Activated CD8-positive, alpha-beta T cell treated with anti-CD3 and anti-CD28 coated beads, Interleukin-2, amount 10 ng/mL, durations not matched to agents 7 days and 5 days (primary cell): ENCODE measurements at regions of chr5 and their contacts with region 1.

Region 1: DNA sequence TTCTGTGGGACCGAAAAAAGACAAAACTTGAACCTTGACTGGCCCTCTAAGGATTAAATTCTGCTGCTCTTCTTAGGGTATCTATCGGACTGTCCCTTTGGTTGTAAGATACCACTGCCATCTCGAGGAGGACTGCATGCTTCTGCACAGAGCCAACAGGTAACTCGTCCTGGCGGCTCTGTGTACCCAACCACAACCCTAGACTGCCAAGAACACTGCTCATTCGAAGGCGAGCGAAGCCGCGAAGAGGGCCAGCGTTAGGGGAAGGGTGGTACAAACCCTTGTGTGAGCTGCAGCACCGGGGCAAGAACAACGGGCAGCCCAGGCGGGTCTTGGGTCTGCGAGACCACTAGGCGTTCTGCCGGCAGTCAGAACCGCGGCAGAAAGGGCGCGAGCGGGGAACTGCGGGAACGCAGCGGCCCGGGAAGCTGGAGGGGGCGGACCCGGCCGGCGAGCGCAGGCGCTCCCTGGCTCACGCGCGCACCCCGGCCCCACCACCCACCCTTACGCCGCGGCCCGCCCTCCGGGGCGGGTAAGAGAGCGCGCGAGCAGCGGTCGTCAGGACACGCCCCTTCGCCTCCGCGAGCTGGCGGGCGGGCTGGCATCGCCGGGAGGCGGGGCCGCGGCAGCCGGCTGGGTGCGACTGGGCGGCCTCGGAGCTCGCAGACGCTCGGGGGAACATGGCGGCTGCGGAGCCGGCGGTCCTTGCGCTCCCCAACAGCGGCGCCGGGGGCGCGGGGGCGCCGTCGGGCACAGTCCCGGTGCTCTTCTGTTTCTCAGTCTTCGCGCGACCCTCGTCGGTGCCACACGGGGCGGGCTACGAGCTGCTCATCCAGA is at the start of gene ISOC1:
- DNase-seq: peak; percentile 91
- ATAC-seq: peak; percentile 93
- H3K4me3 Mint-ChIP-seq: peak within 1 kb of the TSS; percentile 81
- H3K27ac Mint-ChIP-seq: peak within 1 kb of the TSS; percentile 68
- H3K4me1 Mint-ChIP-seq: peaks cover 32% of the 10 kb centered on the region
- H3K27me3 Mint-ChIP-seq: peaks cover 21% of the 10 kb centered on the region
- total RNA-seq, gene ISOC1: 14.7 to 15.6 TPM

Region 2: GRCh38 chr5:129125810-129126209 is 31.5 kb after region 1 on chr5:
- CTCF ChIA-PET with region 1: interaction called, 21 read pairs
- POLR2A ChIA-PET with region 1: interaction called, 13 read pairs
- DNase-seq: no peak
- ATAC-seq: peak; percentile 42
- H3K4me3 Mint-ChIP-seq: peak overlapping the region; percentile 22
- H3K27ac Mint-ChIP-seq: peak overlapping the region; percentile 74
- H3K4me1 Mint-ChIP-seq: peaks cover 12% of the 10 kb centered on the region
- H3K27me3 Mint-ChIP-seq: no peaks in the 10 kb centered on the region

Region 3: DNA sequence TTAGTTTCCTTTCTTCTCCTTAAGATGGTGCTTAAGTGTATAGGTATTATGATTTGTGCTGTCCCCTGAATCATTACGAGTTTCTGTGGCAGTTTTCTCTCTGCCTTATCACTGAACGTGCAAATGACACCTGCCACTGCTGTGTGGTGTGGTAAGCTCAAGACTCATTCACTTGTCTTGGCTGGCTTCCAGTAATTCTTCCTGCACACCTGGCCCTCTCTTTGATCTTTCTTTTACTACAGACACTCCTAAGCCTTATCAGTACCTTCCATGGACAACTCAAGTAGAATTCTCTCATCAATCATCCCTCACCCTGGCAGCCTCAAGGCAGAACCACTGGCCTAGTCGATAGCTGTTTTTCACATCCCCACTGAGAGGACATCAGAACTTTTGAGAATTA is 283.2 kb after region 1 on chr5:
- CTCF ChIA-PET with region 1: no interaction called
- POLR2A ChIA-PET with region 1: no interaction called
- DNase-seq: no peak
- ATAC-seq: no peak
- H3K4me3 Mint-ChIP-seq: no peak overlapping the region
- H3K27ac Mint-ChIP-seq: no peak overlapping the region
- H3K4me1 Mint-ChIP-seq: no peaks in the 10 kb centered on the region
- H3K27me3 Mint-ChIP-seq: no peaks in the 10 kb centered on the region

Region 4: GRCh38 chr5:129541644-129542251 is 447.4 kb after region 1 on chr5:
- CTCF ChIA-PET with region 1: no interaction called
- POLR2A ChIA-PET with region 1: no interaction called
- DNase-seq: no peak
- ATAC-seq: no peak
- H3K4me3 Mint-ChIP-seq: no peak overlapping the region
- H3K27ac Mint-ChIP-seq: no peak overlapping the region
- H3K4me1 Mint-ChIP-seq: no peaks in the 10 kb centered on the region
- H3K27me3 Mint-ChIP-seq: no peaks in the 10 kb centered on the region